ENCODE measurements at regions of chr7 and their contacts with region 1.

Region 1: GRCh38 chr7:104923010-104923421 is 91.0 kb upstream of the KMT2E start:
- DNase-seq: peak; percentile 47
- ATAC-seq: peak; percentile 99
- H3K4me3 Mint-ChIP-seq: no peak overlapping the region
- H3K27ac Mint-ChIP-seq: peak overlapping the region; percentile 46
- H3K4me1 Mint-ChIP-seq: peaks cover 5% of the 10 kb centered on the region
- H3K27me3 Mint-ChIP-seq: no peaks in the 10 kb centered on the region
- CTCF ChIP-seq: peak; percentile 40

Region 2: GRCh38 chr7:103573479-103574058 is 1349.4 kb before region 1 on chr7:
- CTCF ChIA-PET with region 1: interaction called, 24 read pairs
- POLR2A ChIA-PET with region 1: no interaction called
- intact Hi-C with region 1: loop called (anchors 1 kb)
- DNase-seq: no peak
- ATAC-seq: no peak
- H3K4me3 Mint-ChIP-seq: no peak overlapping the region
- H3K27ac Mint-ChIP-seq: no peak overlapping the region
- H3K4me1 Mint-ChIP-seq: no peaks in the 10 kb centered on the region
- H3K27me3 Mint-ChIP-seq: peaks cover 11% of the 10 kb centered on the region
- CTCF ChIP-seq: no peak

Region 3: GRCh38 chr7:104908636-104909035 is 14.4 kb before region 1 on chr7:
- CTCF ChIA-PET with region 1: no interaction called
- POLR2A ChIA-PET with region 1: no interaction called
- intact Hi-C with region 1: no loop called
- DNase-seq: no peak
- ATAC-seq: no peak
- H3K4me3 Mint-ChIP-seq: no peak overlapping the region
- H3K27ac Mint-ChIP-seq: no peak overlapping the region
- H3K4me1 Mint-ChIP-seq: no peaks in the 10 kb centered on the region
- H3K27me3 Mint-ChIP-seq: peaks cover 3% of the 10 kb centered on the region
- CTCF ChIP-seq: no peak

Region 4: GRCh38 chr7:104943502-104944343 is 20.7 kb after region 1 on chr7:
- CTCF ChIA-PET with region 1: interaction called, 4 read pairs
- POLR2A ChIA-PET with region 1: interaction called, 127 read pairs
- intact Hi-C with region 1: loop called (anchors 1 kb)
- DNase-seq: peak; percentile 53
- ATAC-seq: peak; percentile 9
- H3K4me3 Mint-ChIP-seq: peak overlapping the region; percentile 98
- H3K27ac Mint-ChIP-seq: peak overlapping the region; percentile 100
- H3K4me1 Mint-ChIP-seq: peaks cover 83% of the 10 kb centered on the region
- H3K27me3 Mint-ChIP-seq: no peaks in the 10 kb centered on the region
- CTCF ChIP-seq: no peak

Region 5: DNA sequence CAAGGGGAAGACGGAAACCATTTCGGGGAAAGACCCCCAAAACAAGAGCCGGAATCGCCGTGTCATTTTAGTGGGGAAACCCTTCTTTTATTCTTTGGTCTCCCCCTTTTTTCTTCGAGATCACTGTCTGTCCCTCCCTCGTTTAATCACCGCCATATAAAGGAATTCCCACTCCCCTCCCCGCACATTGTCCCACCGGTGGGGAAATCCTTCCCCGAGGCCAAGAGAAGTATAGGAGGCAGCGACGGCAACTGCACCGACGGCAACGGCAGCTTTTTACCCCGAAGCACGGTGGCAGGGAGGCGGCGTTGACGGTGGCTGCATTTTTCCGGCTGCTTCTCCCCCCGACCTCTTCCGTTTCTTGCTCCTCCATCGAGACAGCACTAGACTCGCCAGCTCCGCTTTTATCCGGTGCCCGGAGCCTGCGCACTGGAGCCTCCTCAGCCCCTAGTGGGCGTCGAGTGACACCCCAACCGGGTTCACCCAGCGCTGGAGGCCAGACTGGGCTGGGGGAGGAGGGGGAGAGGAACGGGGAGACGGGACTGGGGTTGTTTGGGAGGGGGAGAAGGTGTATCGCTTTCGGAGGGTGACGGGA is 90.3 kb after region 1 on chr7:
- CTCF ChIA-PET with region 1: interaction called, 3 read pairs
- POLR2A ChIA-PET with region 1: interaction called, 13 read pairs
- intact Hi-C with region 1: loop called (anchors 1 kb)
- DNase-seq: peak; percentile 91
- ATAC-seq: peak; percentile 57
- H3K4me3 Mint-ChIP-seq: peak overlapping the region; percentile 96
- H3K27ac Mint-ChIP-seq: peak overlapping the region; percentile 100
- H3K4me1 Mint-ChIP-seq: peaks cover 53% of the 10 kb centered on the region
- H3K27me3 Mint-ChIP-seq: no peaks in the 10 kb centered on the region
- CTCF ChIP-seq: no peak

Region 6: DNA sequence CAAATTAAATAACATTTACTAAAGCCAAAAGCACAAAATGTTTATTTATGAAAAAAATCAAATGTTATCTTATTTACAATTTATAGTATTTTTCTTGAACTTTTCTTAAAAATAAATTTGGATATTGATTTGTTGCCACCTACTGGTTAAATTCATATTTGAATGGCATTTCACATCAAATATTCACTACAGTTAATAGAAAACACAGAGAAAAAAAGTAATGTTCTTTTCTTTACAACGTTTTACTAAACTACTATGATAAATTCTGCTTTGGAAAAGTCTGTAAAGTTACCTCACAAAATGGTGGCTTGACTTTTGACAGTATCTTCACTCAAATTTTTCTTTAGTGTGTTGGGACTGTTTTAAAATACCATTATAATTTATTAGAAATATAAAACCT is 413.0 kb after region 1 on chr7:
- CTCF ChIA-PET with region 1: no interaction called
- POLR2A ChIA-PET with region 1: no interaction called
- intact Hi-C with region 1: loop called (anchors 2 kb)
- DNase-seq: no peak
- ATAC-seq: no peak
- H3K4me3 Mint-ChIP-seq: no peak overlapping the region
- H3K27ac Mint-ChIP-seq: no peak overlapping the region
- H3K4me1 Mint-ChIP-seq: peaks cover 28% of the 10 kb centered on the region
- H3K27me3 Mint-ChIP-seq: no peaks in the 10 kb centered on the region
- CTCF ChIP-seq: no peak

Region 7: DNA sequence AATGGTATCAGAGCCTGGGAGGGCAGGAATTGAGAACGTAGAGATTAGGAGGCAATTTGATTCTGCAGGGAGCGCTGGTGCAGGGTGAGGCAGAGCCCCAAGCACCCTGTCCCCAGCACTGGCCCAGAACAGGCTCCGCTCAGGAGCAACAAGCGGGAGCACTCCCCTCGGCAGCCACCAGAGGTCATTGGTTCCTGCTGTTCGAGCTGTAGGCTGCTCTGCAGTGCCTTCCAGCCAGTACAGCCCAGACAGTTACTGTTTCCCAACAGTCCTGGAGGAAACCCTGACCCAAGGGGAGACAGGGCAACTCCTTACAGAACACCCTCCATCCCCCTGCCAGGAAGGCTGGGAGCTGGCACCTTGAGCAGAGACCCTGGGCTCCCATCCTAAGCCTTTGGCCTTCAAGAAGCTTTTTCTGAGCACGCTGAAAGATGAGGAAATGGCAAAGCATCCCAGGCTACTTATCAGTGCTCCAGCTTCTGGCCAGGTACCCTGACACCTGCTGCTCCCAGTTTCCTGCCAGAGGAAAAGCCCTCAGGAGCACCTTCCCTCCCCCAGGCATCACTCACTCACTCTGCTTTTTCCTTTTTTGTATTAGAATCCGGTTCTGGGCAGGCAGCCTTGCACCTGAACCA is 729.5 kb after region 1 on chr7:
- CTCF ChIA-PET with region 1: no interaction called
- POLR2A ChIA-PET with region 1: interaction called, 10 read pairs
- intact Hi-C with region 1: no loop called
- DNase-seq: peak; percentile 45
- ATAC-seq: peak; percentile 94
- H3K4me3 Mint-ChIP-seq: no peak overlapping the region
- H3K27ac Mint-ChIP-seq: no peak overlapping the region
- H3K4me1 Mint-ChIP-seq: peaks cover 2% of the 10 kb centered on the region
- H3K27me3 Mint-ChIP-seq: no peaks in the 10 kb centered on the region
- CTCF ChIP-seq: no peak

Measured in activated B cell treated with CpG ODN at 0.5 μM for 24 hours (primary cell).